Activated naive CD4-positive, alpha-beta T cell treated with anti-CD3 and anti-CD28 coated beads for 36 hours (primary cell): ENCODE measurements at regions of chr7 and their contacts with region 1.

Region 1: GRCh38 chr7:38178004-38178694 is at the start of gene STARD3NL:
- DNase-seq: peak; percentile 96
- H3K4me3 Mint-ChIP-seq: peak within 1 kb of the TSS; percentile 94
- H3K27ac Mint-ChIP-seq: peak within 1 kb of the TSS; percentile 91
- H3K4me1 Mint-ChIP-seq: peaks cover 33% of the 10 kb centered on the region
- H3K27me3 Mint-ChIP-seq: peaks cover 9% of the 10 kb centered on the region
- total RNA-seq, gene STARD3NL: 23.7 to 25.7 TPM

Region 2: GRCh38 chr7:37916673-37917660 is 261.2 kb before region 1 on chr7 and contains the start of gene SFRP4:
- CTCF ChIA-PET with region 1: interaction called, 3 read pairs
- intact Hi-C with region 1: loop called (anchors 1 kb)
- DNase-seq: peak; percentile 17
- H3K4me3 Mint-ChIP-seq: peak within 1 kb of the TSS; percentile 22
- H3K27ac Mint-ChIP-seq: no peak within 1 kb of the TSS
- H3K4me1 Mint-ChIP-seq: peaks cover 14% of the 10 kb centered on the region
- H3K27me3 Mint-ChIP-seq: peaks cover 58% of the 10 kb centered on the region
- total RNA-seq, gene SFRP4: not detected

Region 3: GRCh38 chr7:38107486-38107893 is 70.7 kb before region 1 on chr7:
- CTCF ChIA-PET with region 1: interaction called, 3 read pairs
- intact Hi-C with region 1: loop called (anchors 2 kb)
- DNase-seq: peak; percentile 84
- H3K4me3 Mint-ChIP-seq: no peak overlapping the region
- H3K27ac Mint-ChIP-seq: no peak overlapping the region
- H3K4me1 Mint-ChIP-seq: no peaks in the 10 kb centered on the region
- H3K27me3 Mint-ChIP-seq: peaks cover 8% of the 10 kb centered on the region

Region 4: GRCh38 chr7:38215735-38216670 is 37.9 kb after region 1 on chr7:
- CTCF ChIA-PET with region 1: interaction called, 18 read pairs
- intact Hi-C with region 1: loop called (anchors 1 kb)
- DNase-seq: peak; percentile 86
- H3K4me3 Mint-ChIP-seq: no peak overlapping the region
- H3K27ac Mint-ChIP-seq: no peak overlapping the region
- H3K4me1 Mint-ChIP-seq: peaks cover 4% of the 10 kb centered on the region
- H3K27me3 Mint-ChIP-seq: no peaks in the 10 kb centered on the region

Region 5: DNA sequence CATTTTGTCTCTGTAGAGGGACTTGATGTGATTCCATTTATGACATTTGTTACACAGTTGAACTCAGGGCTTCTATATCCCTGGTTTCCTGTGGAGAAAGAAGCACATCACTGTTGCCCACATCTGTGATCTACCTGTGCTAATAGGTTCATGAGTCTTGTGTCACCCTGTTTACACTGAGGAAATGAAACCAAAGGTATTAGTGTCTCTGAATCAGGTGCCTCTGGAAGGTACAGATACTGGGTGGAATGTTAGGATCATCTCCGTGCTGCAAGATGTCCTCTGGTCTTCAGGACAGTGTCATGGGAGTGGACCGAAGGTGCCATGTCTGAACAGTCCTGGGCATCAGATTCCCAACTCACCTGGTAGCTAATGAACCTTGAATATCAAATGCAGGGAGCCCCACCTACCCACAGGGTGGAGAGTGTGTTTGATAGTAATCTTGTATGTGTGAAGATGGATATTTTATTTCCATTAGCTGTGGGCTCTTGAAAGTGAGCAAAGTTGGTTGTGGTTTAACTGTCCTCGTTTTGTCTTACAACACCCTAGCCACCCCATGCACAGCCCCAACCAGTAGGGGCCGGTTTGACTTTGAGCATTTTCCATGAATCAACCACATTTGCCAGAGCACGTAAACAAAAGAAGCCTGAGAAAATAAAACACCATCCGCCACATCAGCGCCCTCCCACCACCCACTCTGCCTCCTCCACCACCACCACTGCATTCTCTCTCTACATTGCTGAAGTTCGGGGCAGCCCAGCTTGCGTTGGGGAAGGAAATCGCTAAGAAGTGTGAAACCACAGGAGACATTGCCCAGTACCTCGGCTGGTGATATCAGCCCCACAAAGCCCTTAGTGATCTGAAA is 54.6 kb after region 1 on chr7:
- CTCF ChIA-PET with region 1: interaction called, 3 read pairs
- intact Hi-C with region 1: loop called (anchors 1 kb)
- DNase-seq: peak; percentile 82
- H3K4me3 Mint-ChIP-seq: peak overlapping the region; percentile 9
- H3K27ac Mint-ChIP-seq: peak overlapping the region; percentile 2
- H3K4me1 Mint-ChIP-seq: peaks cover 21% of the 10 kb centered on the region
- H3K27me3 Mint-ChIP-seq: no peaks in the 10 kb centered on the region

Region 6: DNA sequence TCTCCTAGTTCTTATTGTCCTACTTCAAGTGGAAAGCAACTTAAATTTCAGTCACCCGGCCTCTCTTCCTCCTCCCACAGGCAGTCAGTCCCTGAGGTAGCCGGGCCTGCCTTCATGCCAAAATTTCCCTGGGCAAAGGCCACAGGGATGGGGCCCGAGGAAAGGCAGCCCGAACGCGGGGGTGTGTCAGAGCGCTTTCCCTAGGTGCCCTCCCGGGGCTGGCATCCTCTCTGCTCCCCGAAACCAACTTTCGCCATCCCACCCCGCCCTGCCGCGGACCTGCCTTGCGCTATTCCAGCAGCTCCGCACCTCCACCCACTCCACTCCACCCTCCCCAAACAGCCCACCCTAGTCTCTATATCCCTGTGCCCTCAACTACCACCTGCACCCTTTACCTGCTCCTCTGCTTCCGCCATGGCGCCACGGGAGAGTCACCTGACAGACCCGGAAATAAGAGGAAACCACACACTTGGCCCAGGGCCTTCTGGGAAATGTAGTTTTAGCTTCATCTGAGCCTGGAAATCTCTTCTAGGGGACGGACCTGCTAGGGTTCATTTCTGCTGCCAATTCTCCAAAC is 730.7 kb after region 1 on chr7 and contains the start of gene VPS41:
- CTCF ChIA-PET with region 1: no interaction called
- intact Hi-C with region 1: loop called (anchors 5 kb)
- DNase-seq: peak; percentile 87
- H3K4me3 Mint-ChIP-seq: peak within 1 kb of the TSS; percentile 91
- H3K27ac Mint-ChIP-seq: peak within 1 kb of the TSS; percentile 72
- H3K4me1 Mint-ChIP-seq: peaks cover 40% of the 10 kb centered on the region
- H3K27me3 Mint-ChIP-seq: no peaks in the 10 kb centered on the region
- total RNA-seq, gene VPS41: 51.1 to 57.8 TPM

Region 7: GRCh38 chr7:40134428-40135316 is 1956.5 kb after region 1 on chr7 and contains the starts of genes MPLKIP and SUGCT:
- CTCF ChIA-PET with region 1: no interaction called
- intact Hi-C with region 1: loop called (anchors 10 kb)
- DNase-seq: peak; percentile 87
- H3K4me3 Mint-ChIP-seq: peak within 1 kb of the TSS; percentile 93
- H3K27ac Mint-ChIP-seq: peak within 1 kb of the TSS; percentile 96
- H3K4me1 Mint-ChIP-seq: peaks cover 26% of the 10 kb centered on the region
- H3K27me3 Mint-ChIP-seq: no peaks in the 10 kb centered on the region
- total RNA-seq, gene MPLKIP: 38.1 to 38.8 TPM
- total RNA-seq, gene SUGCT: 0.81 to 1.2 TPM